Dendritic cell treated with granulocyte-macrophage colony-stimulating factor and Interleukin-4, amounts not matched to agents 40 ng/mL and 50 ng/mL, for 4 days (primary cell): ENCODE measurements at regions of chr1 and their contacts with region 1.

Region 1: GRCh38 chr1:15741183-15741850 is 982 bp upstream of the TMEM82 start:
- H3K4me3 Mint-ChIP-seq: no peak overlapping the region
- H3K27ac Mint-ChIP-seq: no peak overlapping the region
- H3K4me1 Mint-ChIP-seq: peaks cover 13% of the 10 kb centered on the region
- H3K27me3 Mint-ChIP-seq: no peaks in the 10 kb centered on the region

Region 2: GRCh38 chr1:15595809-15596617 is 145.3 kb before region 1 on chr1:
- intact Hi-C with region 1: loop called (anchors 2 kb)
- H3K4me3 Mint-ChIP-seq: no peak overlapping the region
- H3K27ac Mint-ChIP-seq: no peak overlapping the region
- H3K4me1 Mint-ChIP-seq: no peaks in the 10 kb centered on the region
- H3K27me3 Mint-ChIP-seq: peaks cover 19% of the 10 kb centered on the region